Activated CD4-positive, alpha-beta memory T cell treated with anti-CD3 and anti-CD28 coated beads, Interleukin-2, amount 10 ng/mL, durations not matched to agents 7 days and 5 days (primary cell): ENCODE measurements at regions of chr15 and their contacts with region 1.

Region 1: GRCh38 chr15:101294731-101295606 is at the start of gene SNRPA1:
- DNase-seq: peak; percentile 97
- H3K4me3 Mint-ChIP-seq: peak within 1 kb of the TSS; percentile 87
- H3K27ac Mint-ChIP-seq: peak within 1 kb of the TSS; percentile 92
- H3K4me1 Mint-ChIP-seq: peaks cover 40% of the 10 kb centered on the region
- H3K27me3 Mint-ChIP-seq: no peaks in the 10 kb centered on the region
- total RNA-seq, gene SNRPA1: 107 to 113 TPM

Region 2: DNA sequence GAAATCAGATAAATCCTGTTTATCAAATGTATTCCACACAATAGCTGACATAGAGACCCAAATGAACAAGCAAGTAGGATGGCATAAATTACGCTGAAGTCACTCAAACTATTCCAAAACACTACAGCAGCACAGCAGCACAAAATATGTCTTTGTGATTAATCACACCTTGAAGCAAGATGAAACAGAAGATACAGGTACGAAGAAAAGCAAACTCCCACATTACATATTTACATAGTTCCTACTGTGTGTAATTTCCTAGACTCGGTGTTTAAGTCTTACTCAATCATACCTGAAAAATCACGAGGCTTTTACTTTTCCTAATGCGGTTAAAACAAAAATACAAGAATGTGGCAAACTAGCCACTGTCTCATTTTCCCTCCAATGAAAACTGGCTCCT is 81.4 kb before region 1 on chr15:
- CTCF ChIA-PET with region 1: no interaction called
- POLR2A ChIA-PET with region 1: no interaction called
- DNase-seq: no peak
- H3K4me3 Mint-ChIP-seq: no peak overlapping the region
- H3K27ac Mint-ChIP-seq: no peak overlapping the region
- H3K4me1 Mint-ChIP-seq: peaks cover 67% of the 10 kb centered on the region
- H3K27me3 Mint-ChIP-seq: no peaks in the 10 kb centered on the region

Region 3: GRCh38 chr15:101277038-101277882 is 17.7 kb before region 1 on chr15 and contains the start of gene SELENOS:
- CTCF ChIA-PET with region 1: interaction called, 40 read pairs
- POLR2A ChIA-PET with region 1: interaction called, 54 read pairs
- DNase-seq: peak; percentile 91
- H3K4me3 Mint-ChIP-seq: peak within 1 kb of the TSS; percentile 96
- H3K27ac Mint-ChIP-seq: peak within 1 kb of the TSS; percentile 86
- H3K4me1 Mint-ChIP-seq: peaks cover 36% of the 10 kb centered on the region
- H3K27me3 Mint-ChIP-seq: no peaks in the 10 kb centered on the region
- total RNA-seq, gene SELENOS: 43.0 to 45.7 TPM

Region 4: GRCh38 chr15:101320501-101321052 is 25.6 kb after region 1 on chr15:
- CTCF ChIA-PET with region 1: interaction called, 31 read pairs
- POLR2A ChIA-PET with region 1: interaction called, 36 read pairs
- DNase-seq: peak; percentile 84
- H3K4me3 Mint-ChIP-seq: peak overlapping the region; percentile 69
- H3K27ac Mint-ChIP-seq: peak overlapping the region; percentile 83
- H3K4me1 Mint-ChIP-seq: peaks cover 16% of the 10 kb centered on the region
- H3K27me3 Mint-ChIP-seq: peaks cover 1% of the 10 kb centered on the region

Region 5: DNA sequence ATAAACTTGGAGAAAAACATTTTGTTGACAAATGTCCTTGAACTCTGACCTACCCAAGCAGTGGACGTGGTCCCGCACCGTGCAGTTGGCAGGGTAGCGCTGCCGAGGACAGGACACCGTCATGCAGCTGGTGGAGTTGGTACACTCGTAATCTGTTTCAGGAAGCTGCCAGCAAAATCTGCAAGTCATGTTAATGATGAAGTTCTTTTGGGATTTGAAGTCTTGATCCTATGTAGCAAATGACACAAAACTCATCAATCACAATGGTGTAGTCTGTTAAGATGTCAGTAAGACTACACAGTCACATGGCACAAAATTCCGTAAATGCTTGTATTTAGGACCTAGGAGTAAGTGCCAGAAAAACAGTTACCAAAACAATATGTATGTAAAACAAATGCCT is 351.7 kb after region 1 on chr15:
- CTCF ChIA-PET with region 1: interaction called, 48 read pairs
- POLR2A ChIA-PET with region 1: interaction called, 46 read pairs
- DNase-seq: no peak
- H3K4me3 Mint-ChIP-seq: no peak overlapping the region
- H3K27ac Mint-ChIP-seq: no peak overlapping the region
- H3K4me1 Mint-ChIP-seq: peaks cover 46% of the 10 kb centered on the region
- H3K27me3 Mint-ChIP-seq: no peaks in the 10 kb centered on the region

Region 6: GRCh38 chr15:101723874-101724674 is 429.1 kb after region 1 on chr15 and contains the start of gene TARS3:
- CTCF ChIA-PET with region 1: interaction called, 5 read pairs
- POLR2A ChIA-PET with region 1: interaction called, 12 read pairs
- DNase-seq: peak; percentile 95
- H3K4me3 Mint-ChIP-seq: peak within 1 kb of the TSS; percentile 85
- H3K27ac Mint-ChIP-seq: peak within 1 kb of the TSS; percentile 94
- H3K4me1 Mint-ChIP-seq: peaks cover 13% of the 10 kb centered on the region
- H3K27me3 Mint-ChIP-seq: no peaks in the 10 kb centered on the region
- total RNA-seq, gene TARS3: 10.3 to 12.3 TPM